Activated CD8-positive, alpha-beta T cell treated with anti-CD3 and anti-CD28 coated beads for 36 hours (primary cell): ENCODE measurements at regions of chr21 and their contacts with region 1.

Region 1: GRCh38 chr21:22297575-22297974 is 1299.4 kb downstream of the NCAM2 start:
- DNase-seq: no peak
- ATAC-seq: no peak
- H3K4me3 Mint-ChIP-seq: no peak overlapping the region
- H3K27ac Mint-ChIP-seq: no peak overlapping the region
- H3K4me1 Mint-ChIP-seq: peaks cover 2% of the 10 kb centered on the region
- H3K27me3 Mint-ChIP-seq: no peaks in the 10 kb centered on the region
- CTCF ChIP-seq: no peak

Region 2: DNA sequence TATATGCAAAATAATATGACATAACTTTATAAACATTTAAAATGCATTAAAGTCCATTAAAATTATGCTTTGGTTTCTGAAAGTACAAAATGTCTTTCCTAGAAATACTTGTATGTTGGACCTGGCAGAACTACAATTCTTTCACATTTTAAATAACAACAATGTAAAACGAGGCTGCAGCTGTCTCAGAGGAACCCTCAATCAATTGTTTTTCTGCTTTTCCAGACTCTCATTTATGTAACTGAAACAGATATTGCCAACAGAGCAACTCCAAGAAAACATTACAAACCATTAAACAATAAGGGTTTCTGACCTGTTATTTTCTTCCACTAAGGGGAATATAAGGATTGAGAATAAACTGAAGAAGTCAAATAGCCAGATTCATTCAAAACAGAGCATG is 106.0 kb before region 1 on chr21:
- CTCF ChIA-PET with region 1: no interaction called
- POLR2A ChIA-PET with region 1: no interaction called
- intact Hi-C with region 1: no loop called
- DNase-seq: no peak
- ATAC-seq: no peak
- H3K4me3 Mint-ChIP-seq: no peak overlapping the region
- H3K27ac Mint-ChIP-seq: no peak overlapping the region
- H3K4me1 Mint-ChIP-seq: no peaks in the 10 kb centered on the region
- H3K27me3 Mint-ChIP-seq: no peaks in the 10 kb centered on the region
- CTCF ChIP-seq: no peak

Region 3: GRCh38 chr21:22235866-22236590 is 61.5 kb before region 1 on chr21:
- CTCF ChIA-PET with region 1: no interaction called
- POLR2A ChIA-PET with region 1: no interaction called
- intact Hi-C with region 1: no loop called
- DNase-seq: no peak
- ATAC-seq: no peak
- H3K4me3 Mint-ChIP-seq: no peak overlapping the region
- H3K27ac Mint-ChIP-seq: no peak overlapping the region
- H3K4me1 Mint-ChIP-seq: no peaks in the 10 kb centered on the region
- H3K27me3 Mint-ChIP-seq: no peaks in the 10 kb centered on the region
- CTCF ChIP-seq: no peak

Region 4: DNA sequence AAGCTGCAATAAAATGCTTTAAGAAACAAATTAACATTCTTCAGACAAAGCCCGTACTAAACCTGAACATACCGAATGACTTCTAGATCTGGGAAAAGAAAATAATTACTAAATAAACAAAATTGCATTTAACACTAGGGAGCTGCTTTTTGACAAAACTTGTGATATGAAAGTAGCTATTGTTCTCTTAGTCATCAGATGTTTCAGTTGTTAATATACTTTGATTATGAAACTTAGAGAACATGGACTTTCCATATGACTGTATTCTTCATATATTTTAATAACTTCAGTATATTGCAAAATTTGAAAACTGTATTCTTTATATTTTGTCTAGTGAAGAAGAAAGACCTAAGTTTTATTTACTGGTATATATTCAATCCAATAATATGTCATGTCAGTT is 37.3 kb before region 1 on chr21:
- CTCF ChIA-PET with region 1: no interaction called
- POLR2A ChIA-PET with region 1: no interaction called
- intact Hi-C with region 1: no loop called
- DNase-seq: no peak
- ATAC-seq: no peak
- H3K4me3 Mint-ChIP-seq: no peak overlapping the region
- H3K27ac Mint-ChIP-seq: no peak overlapping the region
- H3K4me1 Mint-ChIP-seq: no peaks in the 10 kb centered on the region
- H3K27me3 Mint-ChIP-seq: no peaks in the 10 kb centered on the region
- CTCF ChIP-seq: no peak

Region 5: DNA sequence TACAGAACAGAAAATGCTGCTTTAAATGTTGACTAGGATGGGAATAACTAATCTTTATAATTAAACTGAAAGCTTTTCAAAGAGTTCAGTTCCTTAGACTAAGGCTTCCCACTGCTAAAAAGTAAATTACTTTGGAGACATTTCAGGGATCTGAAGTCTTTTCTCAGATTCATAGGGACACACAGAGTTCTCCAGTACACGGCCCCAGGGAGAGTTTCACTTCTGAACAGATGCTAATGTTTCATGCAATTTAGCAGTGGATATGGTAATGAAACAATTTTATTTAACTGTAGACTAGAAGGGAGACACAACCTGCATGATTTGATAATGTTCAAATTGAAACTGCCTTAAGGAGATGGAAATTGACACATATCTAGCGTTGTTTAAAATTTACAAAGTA is 16.7 kb before region 1 on chr21:
- CTCF ChIA-PET with region 1: no interaction called
- POLR2A ChIA-PET with region 1: no interaction called
- intact Hi-C with region 1: loop called (anchors 2 kb)
- DNase-seq: no peak
- ATAC-seq: no peak
- H3K4me3 Mint-ChIP-seq: no peak overlapping the region
- H3K27ac Mint-ChIP-seq: no peak overlapping the region
- H3K4me1 Mint-ChIP-seq: peaks cover 2% of the 10 kb centered on the region
- H3K27me3 Mint-ChIP-seq: no peaks in the 10 kb centered on the region
- CTCF ChIP-seq: no peak

Region 6: GRCh38 chr21:22311741-22312462 is 14.3 kb after region 1 on chr21:
- CTCF ChIA-PET with region 1: no interaction called
- POLR2A ChIA-PET with region 1: no interaction called
- intact Hi-C with region 1: no loop called
- DNase-seq: no peak
- ATAC-seq: no peak
- H3K4me3 Mint-ChIP-seq: no peak overlapping the region
- H3K27ac Mint-ChIP-seq: no peak overlapping the region
- H3K4me1 Mint-ChIP-seq: no peaks in the 10 kb centered on the region
- H3K27me3 Mint-ChIP-seq: no peaks in the 10 kb centered on the region
- CTCF ChIP-seq: no peak